ENCODE measurements at regions of chr2 and their contacts with region 1.

Region 1: DNA sequence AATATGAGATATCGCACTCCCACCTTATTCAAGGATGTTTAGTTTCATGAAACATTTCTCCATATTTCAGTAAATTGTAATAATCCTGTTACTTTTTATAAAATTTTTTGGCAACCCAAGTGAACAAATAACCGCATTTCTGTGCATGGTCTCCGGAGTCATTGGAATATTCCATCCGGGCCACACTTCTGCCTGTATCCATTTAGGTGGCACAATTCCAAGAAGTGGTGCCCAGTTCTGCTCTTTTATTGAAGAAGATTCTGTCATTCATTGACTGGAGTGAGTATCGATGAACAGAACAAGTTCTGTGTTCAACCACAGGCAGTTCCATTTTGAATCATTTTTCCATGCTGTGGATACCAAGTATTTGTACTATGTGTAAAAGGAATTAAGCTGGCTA is 26.6 kb upstream of the ICOS start:
- DNase-seq: no peak
- H3K4me3 ChIP-seq: peak overlapping the region in 1 of 2 donors; percentile 41
- H3K27ac ChIP-seq: peak overlapping the region; percentile 19 to 31
- H3K4me1 ChIP-seq: peaks cover 3 to 7% of the 10 kb centered on the region in 2 donors
- H3K27me3 ChIP-seq: no peaks in the 10 kb centered on the region
- CTCF ChIP-seq: no peak

Region 2: DNA sequence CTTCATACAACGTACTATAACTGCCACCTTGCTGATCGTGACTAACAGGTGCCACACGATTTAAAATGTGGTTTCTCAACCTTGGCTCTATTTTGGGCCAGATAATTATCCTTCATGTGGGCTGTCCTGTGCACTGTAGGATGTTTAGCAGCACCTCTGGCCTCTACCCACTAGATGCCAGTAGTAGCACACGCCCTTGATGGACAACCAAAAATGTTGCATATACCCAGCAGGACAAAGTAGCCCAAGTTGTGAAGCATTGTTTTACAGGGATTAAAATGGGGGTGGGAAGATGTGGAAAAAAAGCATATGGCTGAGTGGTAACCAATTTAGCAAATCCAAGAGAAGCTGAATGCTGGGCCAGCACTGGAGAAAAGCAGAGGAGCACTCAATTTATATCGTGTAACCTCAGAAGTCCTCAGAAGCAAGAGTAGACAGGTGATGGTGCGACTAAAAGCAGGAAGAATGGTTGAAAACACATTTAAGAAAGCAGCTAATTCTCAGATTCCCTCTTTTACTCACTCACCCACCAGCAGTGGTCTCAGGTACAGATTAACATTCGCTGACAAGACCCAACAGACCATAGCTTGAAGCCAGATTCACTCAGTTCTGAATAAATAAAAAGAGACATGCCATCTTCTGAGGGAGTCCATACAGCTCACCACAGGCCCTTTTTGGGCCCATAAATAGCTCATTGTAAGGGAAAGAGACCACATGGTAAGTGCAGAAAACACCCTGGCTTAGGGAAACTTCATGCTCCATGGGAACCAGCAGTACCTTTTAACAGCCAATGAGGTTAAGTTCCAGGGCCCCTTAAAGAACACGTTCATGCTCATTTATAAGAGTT is 425.5 kb before region 1 on chr2:
- intact Hi-C with region 1: loop called (anchors 2 kb)
- DNase-seq: no peak
- H3K4me3 ChIP-seq: no peak overlapping the region
- H3K27ac ChIP-seq: no peak overlapping the region
- H3K4me1 ChIP-seq: no peaks in the 10 kb centered on the region
- H3K27me3 ChIP-seq: no peaks in the 10 kb centered on the region
- CTCF ChIP-seq: peak; percentile 63 to 73 (median 64)